ENCODE measurements at regions of chr3 and their contacts with region 1.

Region 1: DNA sequence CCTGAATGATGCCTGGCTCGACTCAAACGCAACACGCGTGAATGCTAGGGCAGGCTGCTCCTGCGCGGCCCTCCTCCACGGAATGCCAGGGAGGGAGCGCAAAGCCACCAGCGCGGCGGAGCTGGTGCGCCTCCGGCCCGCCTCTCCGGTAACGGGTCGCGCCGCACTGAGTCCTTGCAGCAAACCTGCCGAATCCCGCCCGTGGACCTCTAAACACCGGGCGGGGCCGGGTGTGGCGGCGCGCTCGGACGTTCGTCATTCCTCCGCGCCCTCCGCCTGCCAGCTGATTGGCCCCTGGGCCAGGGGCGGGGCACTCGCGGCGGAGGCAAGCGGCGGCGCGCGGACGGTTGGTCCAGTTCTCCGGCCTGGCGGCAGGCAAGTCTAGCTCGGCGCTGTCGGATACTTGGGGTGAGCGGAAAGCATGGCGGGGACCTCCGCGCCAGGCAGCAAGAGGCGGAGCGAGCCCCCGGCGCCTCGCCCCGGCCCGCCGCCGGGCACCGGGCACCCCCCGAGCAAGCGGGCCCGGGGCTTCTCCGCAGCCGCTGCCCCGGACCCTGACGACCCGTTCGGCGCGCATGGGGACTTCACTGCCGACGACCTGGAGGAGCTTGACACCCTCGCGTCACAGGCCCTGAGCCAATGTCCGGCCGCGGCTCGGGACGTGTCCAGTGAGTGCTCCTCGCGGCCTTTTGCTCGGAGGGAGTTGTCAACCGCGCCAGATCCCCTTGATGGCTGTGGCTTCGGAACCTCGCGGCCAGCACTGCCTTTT is at the start of gene ATRIP:
- DNase-seq: peak; percentile 89
- ATAC-seq: peak; percentile 99
- H3K4me3 ChIP-seq: peak within 1 kb of the TSS; percentile 50 to 82 (median 73)
- H3K4me3 Mint-ChIP-seq: peak within 1 kb of the TSS; percentile 91
- H3K27ac ChIP-seq: peak within 1 kb of the TSS; percentile 37 to 69
- H3K27ac Mint-ChIP-seq: peak within 1 kb of the TSS; percentile 91
- H3K4me1 ChIP-seq: peaks cover 20 to 27% of the 10 kb centered on the region in 2 donors
- H3K4me1 Mint-ChIP-seq: peaks cover 37% of the 10 kb centered on the region
- H3K27me3 ChIP-seq: no peaks in the 10 kb centered on the region
- H3K27me3 Mint-ChIP-seq: no peaks in the 10 kb centered on the region
- CTCF ChIP-seq: no peak
- total RNA-seq, gene ATRIP: 11.6 and 14.3 TPM in 2 replicates

Region 2: GRCh38 chr3:48408823-48409281 is 37.8 kb before region 1 on chr3:
- CTCF ChIA-PET with region 1: no interaction called
- POLR2A ChIA-PET with region 1: no interaction called
- intact Hi-C with region 1: no loop called
- DNase-seq: no peak
- ATAC-seq: no peak
- H3K4me3 ChIP-seq: no peak overlapping the region
- H3K4me3 Mint-ChIP-seq: no peak overlapping the region
- H3K27ac ChIP-seq: no peak overlapping the region
- H3K27ac Mint-ChIP-seq: no peak overlapping the region
- H3K4me1 ChIP-seq: no peaks in the 10 kb centered on the region
- H3K4me1 Mint-ChIP-seq: no peaks in the 10 kb centered on the region
- H3K27me3 ChIP-seq: no peaks in the 10 kb centered on the region
- H3K27me3 Mint-ChIP-seq: no peaks in the 10 kb centered on the region
- CTCF ChIP-seq: no peak

Region 3: DNA sequence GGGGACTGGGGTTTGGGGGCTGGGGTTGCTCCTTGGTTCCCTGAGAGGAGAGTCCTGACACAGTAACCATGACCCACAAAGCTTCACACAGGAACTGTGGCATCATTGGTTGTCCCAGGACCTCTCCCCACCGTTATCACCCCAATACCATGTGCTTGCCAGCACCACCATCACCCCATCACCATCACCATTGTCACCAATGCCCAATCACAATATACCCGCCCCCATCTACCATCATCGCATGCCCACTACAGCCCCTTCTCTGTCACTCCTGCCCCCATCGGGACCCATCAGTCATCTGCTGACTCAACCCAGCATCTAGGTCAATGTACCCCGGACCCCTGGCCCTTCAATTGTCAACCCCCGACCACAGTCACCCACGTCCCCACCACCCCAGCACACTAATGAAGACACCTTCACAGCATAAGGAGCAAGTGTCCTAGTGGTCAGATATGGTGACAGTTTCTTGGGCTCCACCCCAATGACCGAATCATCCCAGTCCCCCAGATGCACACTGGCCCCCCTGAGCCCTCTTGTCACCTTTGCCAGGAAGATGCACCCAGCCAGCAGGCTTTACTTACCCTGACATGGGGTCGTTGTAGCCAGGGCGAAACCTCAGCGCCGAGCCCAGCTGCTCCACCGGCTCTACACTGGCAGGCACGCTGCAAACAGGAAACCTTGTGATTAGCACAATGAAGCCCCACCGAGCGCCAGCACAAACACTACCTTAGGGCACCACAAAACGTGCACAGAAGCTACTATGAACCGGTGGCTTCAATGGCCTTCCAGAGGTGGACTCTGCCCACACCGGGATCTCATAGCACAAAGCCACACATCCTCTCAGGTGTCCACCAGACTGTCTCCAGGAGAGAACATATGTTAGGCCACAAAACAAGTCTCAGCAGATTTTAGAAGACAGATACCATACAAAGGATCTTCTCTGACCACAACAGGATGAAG is 32.3 kb after region 1 on chr3:
- CTCF ChIA-PET with region 1: no interaction called
- POLR2A ChIA-PET with region 1: interaction called, 10 read pairs
- intact Hi-C with region 1: no loop called
- DNase-seq: peak; percentile 72
- ATAC-seq: peak; percentile 78
- H3K4me3 ChIP-seq: peak overlapping the region in 4 of 5 experiments; percentile 37 to 52 (median 44)
- H3K4me3 Mint-ChIP-seq: peak overlapping the region; percentile 86
- H3K27ac ChIP-seq: peak overlapping the region; percentile 85 to 89
- H3K27ac Mint-ChIP-seq: peak overlapping the region; percentile 99
- H3K4me1 ChIP-seq: peaks cover 38 to 45% of the 10 kb centered on the region in 2 donors
- H3K4me1 Mint-ChIP-seq: peaks cover 45% of the 10 kb centered on the region
- H3K27me3 ChIP-seq: no peaks in the 10 kb centered on the region
- H3K27me3 Mint-ChIP-seq: no peaks in the 10 kb centered on the region
- CTCF ChIP-seq: no peak